ENCODE measurements at regions of chr1 and their contacts with region 1.

Region 1: DNA sequence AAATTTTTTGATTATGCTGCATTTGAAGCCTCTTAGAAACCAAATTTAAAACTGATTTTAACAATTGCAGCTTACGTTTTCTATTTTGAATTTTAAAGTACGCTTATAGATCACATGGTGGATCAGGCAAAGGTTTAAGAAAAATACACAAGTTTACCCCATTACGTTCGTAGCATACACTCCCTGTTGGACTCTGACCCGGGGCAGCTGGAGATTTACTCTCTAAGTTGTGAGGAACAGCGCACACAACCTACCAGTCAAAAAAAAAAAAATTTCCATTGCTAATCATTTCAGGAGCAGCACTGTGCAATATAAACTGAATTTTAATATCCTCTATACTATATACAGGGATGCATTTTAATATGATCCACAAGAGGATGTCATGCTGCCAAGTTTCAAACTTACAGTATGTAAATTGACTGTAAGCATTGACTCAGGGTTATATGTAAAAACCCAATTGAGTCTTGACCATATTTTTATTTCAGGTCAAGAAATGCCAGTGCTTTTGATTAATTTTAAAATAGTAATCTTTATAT is 20.4 kb downstream of the CSDE1 start:
- DNase-seq: no peak
- ATAC-seq: peak; percentile 67
- H3K4me3 ChIP-seq: no peak overlapping the region
- H3K27ac ChIP-seq: peak overlapping the region; percentile 28
- H3K4me1 ChIP-seq: peaks cover 20% of the 10 kb centered on the region
- H3K27me3 ChIP-seq: no peaks in the 10 kb centered on the region; a peak in 1 of 5 replicates
- CTCF ChIP-seq: no peak
- EP300 ChIP-seq: no peak
- POLR2A ChIP-seq: no peak
- RAD21 ChIP-seq: no peak

Region 2: DNA sequence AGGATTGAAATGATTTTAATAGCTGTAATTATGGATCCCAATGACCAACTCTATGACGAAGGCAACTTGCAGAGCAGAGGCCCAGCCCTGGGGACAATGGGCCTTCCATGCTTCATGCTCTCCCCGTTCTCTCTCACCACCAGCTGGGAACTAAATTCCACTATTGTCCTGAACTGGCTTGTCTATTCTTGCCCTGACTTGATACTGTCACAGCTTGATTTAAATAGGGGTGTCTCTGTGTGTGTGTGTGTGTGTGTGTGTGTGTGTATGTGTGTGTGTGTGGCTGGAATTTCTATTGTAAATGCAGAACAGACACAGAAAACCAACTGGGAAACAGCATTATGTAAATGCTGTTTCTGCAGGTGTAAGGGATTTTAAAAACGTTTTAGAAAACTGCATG is 1295.9 kb after region 1 on chr1:
- CTCF ChIA-PET with region 1: no interaction called
- POLR2A ChIA-PET with region 1: no interaction called
- in situ Hi-C with region 1: no loop called
- intact Hi-C with region 1: loop called (anchors 5 kb)
- DNase-seq: no peak
- ATAC-seq: no peak
- H3K4me3 ChIP-seq: no peak overlapping the region
- H3K27ac ChIP-seq: no peak overlapping the region
- H3K4me1 ChIP-seq: no peaks in the 10 kb centered on the region
- H3K27me3 ChIP-seq: no peaks in the 10 kb centered on the region
- CTCF ChIP-seq: no peak
- EP300 ChIP-seq: no peak
- POLR2A ChIP-seq: no peak
- RAD21 ChIP-seq: no peak

Measured in HepG2 (cell line).